Activated CD4-positive, alpha-beta memory T cell treated with anti-CD3 and anti-CD28 coated beads, Interleukin-2, amount 10 ng/mL, durations not matched to agents 7 days and 5 days (primary cell): ENCODE measurements at regions of chr2 and their contacts with region 1.

Region 1: DNA sequence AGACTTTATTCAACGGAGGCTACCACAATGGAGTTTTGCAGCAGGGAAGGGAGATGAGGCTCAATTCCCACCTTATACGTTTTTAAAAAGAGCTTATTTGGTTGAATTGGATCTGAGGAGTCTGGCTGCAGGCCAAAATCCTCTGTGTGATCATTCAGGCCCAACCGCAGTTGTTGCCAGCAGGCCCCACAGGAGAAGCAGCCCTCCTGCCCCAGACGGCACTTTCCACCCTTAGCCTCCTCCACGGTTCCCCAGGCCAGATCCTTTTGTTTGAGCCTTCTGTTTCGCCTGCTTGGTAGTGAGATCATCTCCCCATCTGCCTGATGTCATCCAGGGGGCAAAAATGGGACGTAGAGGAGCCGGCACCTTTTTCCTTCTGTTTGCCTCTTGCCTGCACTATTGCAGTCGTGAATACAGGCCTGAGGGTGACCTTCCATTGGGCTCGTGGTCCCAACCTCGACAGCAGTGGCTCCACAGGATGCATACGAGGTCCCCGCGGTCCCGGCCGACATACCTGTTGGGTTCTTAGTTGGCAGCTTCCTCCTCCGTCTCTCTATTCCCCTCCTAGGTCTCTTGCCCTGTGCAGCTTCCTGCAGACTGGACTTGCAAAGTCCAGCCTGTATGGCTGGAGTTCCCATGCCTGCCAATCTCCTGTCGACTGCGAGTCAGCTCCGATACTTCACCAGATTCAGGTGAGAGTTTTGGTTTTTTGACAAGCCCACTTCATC is 9.3 kb upstream of the GPR35 start:
- DNase-seq: no peak
- H3K4me3 Mint-ChIP-seq: no peak overlapping the region
- H3K27ac Mint-ChIP-seq: no peak overlapping the region
- H3K4me1 Mint-ChIP-seq: peaks cover 29% of the 10 kb centered on the region
- H3K27me3 Mint-ChIP-seq: no peaks in the 10 kb centered on the region

Region 2: DNA sequence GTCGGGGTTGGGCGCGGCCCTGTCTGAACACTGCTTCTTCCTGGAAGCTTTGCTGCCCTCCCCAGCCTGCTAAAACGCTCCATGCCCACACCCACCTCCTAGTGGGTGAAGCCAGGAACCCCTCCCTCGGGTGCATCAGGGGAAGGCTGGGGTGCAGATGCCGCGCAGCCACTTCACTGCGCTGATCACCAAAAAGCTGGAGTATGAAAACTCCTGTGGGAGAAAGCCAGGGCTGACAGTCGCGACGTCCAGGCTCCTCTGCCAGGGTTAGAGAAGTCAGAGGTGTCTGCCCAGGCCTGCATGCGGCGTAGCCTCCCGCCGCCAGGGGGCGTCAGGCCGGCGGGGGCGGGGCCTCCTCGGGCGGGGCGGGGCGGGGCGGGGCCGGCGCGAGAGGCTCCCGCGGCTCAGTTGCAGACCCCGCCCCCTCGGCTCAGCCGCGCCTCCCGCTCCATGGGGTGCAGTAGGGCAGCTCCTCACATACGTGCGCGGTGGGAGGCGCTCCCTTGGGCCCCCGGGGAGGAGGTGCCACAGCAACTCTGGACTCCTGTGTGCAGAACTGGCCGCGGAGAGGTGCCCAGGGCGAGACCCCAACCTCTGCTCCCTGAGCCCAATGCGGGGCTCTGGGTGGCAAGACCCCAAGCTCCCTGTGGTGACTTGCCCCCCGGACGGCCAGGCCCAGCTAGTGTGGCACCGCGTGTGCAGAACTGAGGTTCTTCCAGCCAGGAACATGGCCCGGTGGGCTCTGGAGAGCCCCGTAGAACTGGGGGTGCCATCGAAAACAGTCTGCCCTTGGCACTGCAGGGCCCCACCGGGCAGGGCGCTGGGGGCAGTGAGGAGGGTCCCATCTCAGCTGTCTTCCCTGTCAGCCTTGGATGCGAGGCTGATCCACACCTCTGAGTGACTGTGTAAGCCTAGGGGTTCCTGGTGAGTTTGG is 49.5 kb before region 1 on chr2:
- CTCF ChIA-PET with region 1: interaction called, 14 read pairs
- POLR2A ChIA-PET with region 1: interaction called, 39 read pairs
- DNase-seq: peak; percentile 97
- H3K4me3 Mint-ChIP-seq: peak overlapping the region; percentile 94
- H3K27ac Mint-ChIP-seq: peak overlapping the region; percentile 97
- H3K4me1 Mint-ChIP-seq: peaks cover 71% of the 10 kb centered on the region
- H3K27me3 Mint-ChIP-seq: no peaks in the 10 kb centered on the region

Region 3: GRCh38 chr2:240646176-240646899 is 30.4 kb after region 1 on chr2:
- CTCF ChIA-PET with region 1: no interaction called
- POLR2A ChIA-PET with region 1: no interaction called
- DNase-seq: peak; percentile 36
- H3K4me3 Mint-ChIP-seq: no peak overlapping the region
- H3K27ac Mint-ChIP-seq: no peak overlapping the region
- H3K4me1 Mint-ChIP-seq: peaks cover 5% of the 10 kb centered on the region
- H3K27me3 Mint-ChIP-seq: peaks cover 30% of the 10 kb centered on the region

Region 4: GRCh38 chr2:240714747-240715725 is 99.1 kb after region 1 on chr2:
- CTCF ChIA-PET with region 1: no interaction called
- POLR2A ChIA-PET with region 1: no interaction called
- DNase-seq: no peak
- H3K4me3 Mint-ChIP-seq: no peak overlapping the region
- H3K27ac Mint-ChIP-seq: no peak overlapping the region
- H3K4me1 Mint-ChIP-seq: no peaks in the 10 kb centered on the region
- H3K27me3 Mint-ChIP-seq: no peaks in the 10 kb centered on the region